PC-3 (cell line): ENCODE measurements at regions of chr10 and their contacts with region 1.

Region 1: GRCh38 chr10:58747687-58748086 is 235.0 kb downstream of the BICC1 start:
- DNase-seq: no peak
- ATAC-seq: no peak
- H3K4me3 ChIP-seq: no peak overlapping the region
- H3K27ac ChIP-seq: no peak overlapping the region
- H3K4me1 ChIP-seq: no peaks in the 10 kb centered on the region
- H3K27me3 ChIP-seq: peaks cover 23% of the 10 kb centered on the region
- CTCF ChIP-seq: no peak

Region 2: GRCh38 chr10:59817773-59818172 is 1070.1 kb after region 1 on chr10:
- CTCF ChIA-PET with region 1: no interaction called
- POLR2A ChIA-PET with region 1: interaction called, 13 read pairs
- intact Hi-C with region 1: no loop called
- DNase-seq: no peak
- ATAC-seq: no peak
- H3K4me3 ChIP-seq: no peak overlapping the region
- H3K27ac ChIP-seq: no peak overlapping the region
- H3K4me1 ChIP-seq: no peaks in the 10 kb centered on the region
- H3K27me3 ChIP-seq: no peaks in the 10 kb centered on the region
- CTCF ChIP-seq: no peak